ENCODE measurements at regions of chr11 and their contacts with region 1.

Region 1: DNA sequence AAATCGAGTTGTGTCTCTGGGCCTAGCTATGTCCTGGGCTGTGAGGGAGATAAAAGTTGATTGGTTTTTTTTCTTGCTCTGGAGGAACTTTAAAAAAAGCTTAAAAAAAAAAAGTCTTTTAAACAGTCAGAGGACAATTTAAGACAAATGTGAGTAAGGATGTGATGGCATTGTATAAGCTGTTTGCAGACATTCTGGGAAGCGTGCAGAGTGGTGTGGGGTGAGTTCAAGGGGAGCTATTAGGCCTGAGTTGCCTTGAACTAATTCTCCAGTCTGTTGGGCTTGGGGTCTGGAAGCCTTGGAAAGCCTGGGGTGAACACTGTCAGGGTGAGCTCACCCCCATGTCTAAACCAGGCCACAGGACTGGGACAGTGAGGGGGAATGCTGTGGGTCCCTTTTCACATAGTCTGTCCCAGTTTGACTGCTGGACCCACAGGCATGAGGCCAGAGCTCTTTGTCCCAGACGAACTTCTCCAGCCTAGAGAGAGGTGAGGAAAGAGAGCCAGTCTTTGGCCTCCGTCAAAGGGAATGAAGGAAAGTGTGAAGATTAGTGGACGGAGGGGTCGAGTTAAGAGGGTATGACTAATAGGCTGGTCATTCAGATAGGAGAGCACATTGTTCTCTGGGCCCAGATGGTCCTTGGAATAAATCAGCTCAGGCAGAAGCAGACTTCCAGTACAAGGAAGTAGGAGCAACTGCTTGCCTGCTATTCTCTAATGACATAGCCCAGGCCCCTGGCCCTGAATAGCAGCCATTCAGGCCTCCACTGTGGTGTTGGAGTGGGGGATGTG is 76.4 kb upstream of the NNMT start:
- DNase-seq: no peak
- H3K4me3 ChIP-seq: no peak overlapping the region
- H3K27ac ChIP-seq: peak overlapping the region in 3 of 4 donors; percentile 13 to 70 (median 61)
- H3K4me1 ChIP-seq: peaks cover 0 to 64% (median 52%) of the 10 kb centered on the region in 4 donors
- H3K27me3 ChIP-seq: no peaks in the 10 kb centered on the region
- CTCF ChIP-seq: no peak
- EP300 ChIP-seq: peak in 1 of 4 donors; percentile 56
- POLR2A ChIP-seq: no peak

Region 2: DNA sequence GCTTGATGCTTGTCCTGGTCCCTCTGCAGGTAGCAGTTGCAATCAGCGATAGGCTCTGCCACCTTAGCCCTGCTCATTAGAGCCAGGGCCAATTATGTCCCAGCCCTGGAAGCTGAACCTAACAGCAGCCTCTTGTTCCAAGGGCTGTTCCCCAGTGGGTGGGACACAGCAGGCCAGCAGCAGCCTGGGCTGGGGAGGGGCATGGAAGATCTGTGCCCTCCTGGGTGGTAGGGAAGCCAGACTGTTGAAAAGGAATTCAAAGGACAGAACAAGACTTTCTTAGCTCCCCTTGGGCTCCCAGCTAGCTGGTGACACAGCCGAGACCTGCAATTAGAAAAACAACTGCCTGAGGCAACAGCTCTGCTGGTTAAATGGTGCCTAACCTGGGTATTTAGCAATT is 762.0 kb before region 1 on chr11:
- intact Hi-C with region 1: no loop called
- DNase-seq: no peak
- H3K4me3 ChIP-seq: no peak overlapping the region
- H3K27ac ChIP-seq: no peak overlapping the region
- H3K4me1 ChIP-seq: no peaks in the 10 kb centered on the region
- H3K27me3 ChIP-seq: no peaks in the 10 kb centered on the region
- CTCF ChIP-seq: no peak
- EP300 ChIP-seq: no peak
- POLR2A ChIP-seq: no peak

Region 3: GRCh38 chr11:114057147-114057546 is 162.6 kb before region 1 on chr11:
- intact Hi-C with region 1: no loop called
- DNase-seq: peak; percentile 64
- H3K4me3 ChIP-seq: no peak overlapping the region
- H3K27ac ChIP-seq: peak overlapping the region in 1 of 4 donors; percentile 94
- H3K4me1 ChIP-seq: peaks cover 0 to 32% (median 23%) of the 10 kb centered on the region in 4 donors
- H3K27me3 ChIP-seq: no peaks in the 10 kb centered on the region
- CTCF ChIP-seq: no peak
- EP300 ChIP-seq: no peak
- POLR2A ChIP-seq: no peak

Region 4: GRCh38 chr11:114233755-114234154 is 14.0 kb after region 1 on chr11:
- intact Hi-C with region 1: loop called (anchors 1 kb)
- DNase-seq: no peak
- H3K4me3 ChIP-seq: no peak overlapping the region
- H3K27ac ChIP-seq: no peak overlapping the region
- H3K4me1 ChIP-seq: peaks cover 0 to 49% (median 34%) of the 10 kb centered on the region in 4 donors
- H3K27me3 ChIP-seq: no peaks in the 10 kb centered on the region
- CTCF ChIP-seq: no peak
- EP300 ChIP-seq: no peak
- POLR2A ChIP-seq: no peak

Region 5: DNA sequence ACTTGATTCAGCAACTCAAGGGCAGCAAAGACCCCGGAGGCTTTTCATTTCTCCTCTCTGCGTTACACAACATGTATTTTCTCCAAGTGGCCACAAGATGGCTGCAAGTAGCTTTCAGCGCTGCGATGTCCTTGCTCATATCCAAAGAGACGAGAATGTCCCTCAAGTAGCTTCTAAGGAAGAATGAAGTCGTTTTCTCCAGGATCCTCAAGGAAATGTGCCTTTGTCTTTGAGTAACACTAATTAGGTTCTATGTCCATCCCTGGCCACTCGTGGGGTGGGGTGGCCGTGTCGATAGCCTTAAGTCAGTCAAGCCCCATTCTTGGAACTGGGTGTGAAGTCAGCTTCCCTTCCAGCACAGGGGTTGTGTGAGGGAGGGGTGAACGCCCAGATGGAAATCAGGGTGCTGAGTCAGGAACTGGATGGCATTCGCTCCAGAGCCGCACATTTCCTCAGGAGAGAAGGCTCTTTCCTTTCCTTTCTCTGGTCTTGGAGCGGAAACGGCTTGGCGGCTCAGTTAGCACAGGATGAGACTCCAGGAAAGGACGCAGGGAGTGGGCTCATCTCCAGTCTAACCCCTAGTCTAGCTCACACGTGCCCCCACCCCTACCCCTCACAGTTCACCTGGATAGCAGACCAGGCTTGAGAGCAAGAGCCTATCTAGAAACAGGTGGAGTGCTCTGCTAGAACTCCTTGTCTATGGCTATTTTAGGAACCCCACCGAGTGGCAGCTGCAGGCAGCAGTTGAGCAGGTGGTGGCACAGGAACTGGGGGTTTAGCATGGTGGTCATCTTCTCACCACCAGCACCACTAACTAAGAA is 120.8 kb after region 1 on chr11:
- intact Hi-C with region 1: no loop called
- DNase-seq: peak; percentile 81
- H3K4me3 ChIP-seq: peak overlapping the region in 1 of 4 donors; percentile 14
- H3K27ac ChIP-seq: peak overlapping the region in 1 of 4 donors; percentile 27
- H3K4me1 ChIP-seq: peaks cover 0 to 10% (median 7%) of the 10 kb centered on the region in 4 donors
- H3K27me3 ChIP-seq: no peaks in the 10 kb centered on the region
- CTCF ChIP-seq: peak; percentile 70 to 81 (median 74)
- EP300 ChIP-seq: no peak
- POLR2A ChIP-seq: no peak

Measured in sigmoid colon (tissue), 7 donors.